Activated naive CD8-positive, alpha-beta T cell treated with anti-CD3 and anti-CD28 coated beads, Interleukin-2, amount 10 ng/mL, durations not matched to agents 7 days and 5 days (primary cell): ENCODE measurements at regions of chr16 and their contacts with region 1.

Region 1: GRCh38 chr16:70380861-70381603 is 34.3 kb downstream of the DDX19A start:
- DNase-seq: peak; percentile 92
- ATAC-seq: peak; percentile 92
- H3K4me3 Mint-ChIP-seq: peak overlapping the region; percentile 96
- H3K27ac Mint-ChIP-seq: peak overlapping the region; percentile 99
- H3K4me1 Mint-ChIP-seq: peaks cover 9% of the 10 kb centered on the region
- H3K27me3 Mint-ChIP-seq: no peaks in the 10 kb centered on the region

Region 2: GRCh38 chr16:70289229-70290098 is 91.6 kb before region 1 on chr16 and contains the start of gene AARS1:
- POLR2A ChIA-PET with region 1: interaction called, 14 read pairs
- DNase-seq: peak; percentile 93
- ATAC-seq: peak; percentile 97
- H3K4me3 Mint-ChIP-seq: peak within 1 kb of the TSS; percentile 99
- H3K27ac Mint-ChIP-seq: peak within 1 kb of the TSS; percentile 99
- H3K4me1 Mint-ChIP-seq: peaks cover 24% of the 10 kb centered on the region
- H3K27me3 Mint-ChIP-seq: no peaks in the 10 kb centered on the region
- total RNA-seq, gene AARS1: 121 to 122 TPM

Region 3: GRCh38 chr16:70324998-70325747 is 55.9 kb before region 1 on chr16:
- POLR2A ChIA-PET with region 1: no interaction called
- DNase-seq: no peak
- ATAC-seq: no peak
- H3K4me3 Mint-ChIP-seq: no peak overlapping the region
- H3K27ac Mint-ChIP-seq: no peak overlapping the region
- H3K4me1 Mint-ChIP-seq: peaks cover 1% of the 10 kb centered on the region
- H3K27me3 Mint-ChIP-seq: no peaks in the 10 kb centered on the region

Region 4: DNA sequence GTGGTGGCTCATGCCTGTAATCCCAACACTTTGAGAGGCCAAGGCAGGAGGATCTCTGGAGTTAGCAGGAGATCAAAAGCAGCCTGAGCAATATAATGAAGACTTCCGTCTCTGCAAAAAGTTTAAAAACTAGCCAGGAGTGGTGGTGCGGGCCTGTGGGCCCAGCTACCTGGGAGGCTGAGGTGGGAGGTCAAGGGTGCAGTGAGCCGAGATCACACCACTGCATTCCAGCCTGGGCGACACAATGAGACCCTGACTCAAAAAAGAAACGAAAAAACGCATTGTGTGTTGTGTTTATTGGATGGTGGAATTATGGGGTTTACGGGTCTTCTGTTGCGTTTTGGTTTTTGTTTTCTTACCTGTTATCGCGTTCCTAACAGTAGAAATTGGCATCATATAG is 35.2 kb before region 1 on chr16:
- POLR2A ChIA-PET with region 1: interaction called, 32 read pairs
- DNase-seq: no peak
- ATAC-seq: no peak
- H3K4me3 Mint-ChIP-seq: peak overlapping the region; percentile 97
- H3K27ac Mint-ChIP-seq: peak overlapping the region; percentile 98
- H3K4me1 Mint-ChIP-seq: peaks cover 30% of the 10 kb centered on the region
- H3K27me3 Mint-ChIP-seq: no peaks in the 10 kb centered on the region

Region 5: DNA sequence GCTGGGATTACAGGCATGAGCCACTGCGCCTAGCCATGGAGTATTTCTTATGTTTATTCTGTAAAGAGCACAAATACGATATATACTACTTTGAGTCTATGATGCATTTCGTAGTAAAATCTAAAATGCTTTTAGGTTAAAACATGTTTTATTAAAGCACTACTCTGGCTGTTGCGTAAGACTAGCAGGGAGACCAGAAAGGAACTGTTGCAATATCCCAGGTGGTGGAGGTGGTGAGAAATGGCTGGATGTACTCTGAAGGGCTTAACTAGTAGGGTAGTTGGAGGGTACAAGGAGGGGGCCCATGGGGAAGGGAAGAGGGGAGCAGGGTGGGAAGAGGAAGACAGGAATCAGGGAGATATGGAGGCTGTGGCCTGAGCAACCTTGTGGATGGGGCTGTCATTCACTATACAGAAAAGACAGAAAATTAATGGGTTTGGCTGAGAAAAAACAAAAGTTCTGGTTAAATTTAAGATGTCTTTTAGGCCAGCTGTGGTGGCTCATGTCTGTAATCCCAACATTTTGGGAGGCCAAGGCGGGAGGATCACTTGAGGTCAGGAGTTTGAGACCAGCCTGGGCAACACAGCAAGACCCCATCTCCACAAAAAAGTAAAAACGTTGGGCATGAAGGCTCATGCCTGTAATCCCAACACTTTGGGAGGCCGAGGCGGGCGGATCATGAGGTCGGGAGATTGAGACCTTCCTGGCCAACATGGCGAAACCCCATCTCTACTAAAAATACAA is 22.1 kb after region 1 on chr16:
- POLR2A ChIA-PET with region 1: interaction called, 20 read pairs
- DNase-seq: no peak
- ATAC-seq: no peak
- H3K4me3 Mint-ChIP-seq: peak overlapping the region; percentile 17
- H3K27ac Mint-ChIP-seq: peak overlapping the region; percentile 76
- H3K4me1 Mint-ChIP-seq: peaks cover 36% of the 10 kb centered on the region
- H3K27me3 Mint-ChIP-seq: no peaks in the 10 kb centered on the region

Region 6: GRCh38 chr16:70438969-70439862 is 58.2 kb after region 1 on chr16 and contains the start of gene ST3GAL2:
- POLR2A ChIA-PET with region 1: interaction called, 32 read pairs
- DNase-seq: peak; percentile 93
- ATAC-seq: peak; percentile 94
- H3K4me3 Mint-ChIP-seq: peak within 1 kb of the TSS; percentile 95
- H3K27ac Mint-ChIP-seq: peak within 1 kb of the TSS; percentile 93
- H3K4me1 Mint-ChIP-seq: peaks cover 28% of the 10 kb centered on the region
- H3K27me3 Mint-ChIP-seq: no peaks in the 10 kb centered on the region
- total RNA-seq, gene ST3GAL2: 31.9 to 38.6 TPM

Region 7: GRCh38 chr16:70523076-70523742 is 142.2 kb after region 1 on chr16 and contains the start of gene COG4:
- POLR2A ChIA-PET with region 1: interaction called, 63 read pairs
- DNase-seq: peak; percentile 88
- ATAC-seq: peak; percentile 70
- H3K4me3 Mint-ChIP-seq: peak within 1 kb of the TSS; percentile 97
- H3K27ac Mint-ChIP-seq: peak within 1 kb of the TSS; percentile 98
- H3K4me1 Mint-ChIP-seq: peaks cover 38% of the 10 kb centered on the region
- H3K27me3 Mint-ChIP-seq: no peaks in the 10 kb centered on the region
- total RNA-seq, gene COG4: 73.8 to 75.3 TPM